Activated T-helper 2 cell treated with anti-CD3 and anti-CD28 coated beads, Interferon-gamma antibody, Interleukin-2, Interleukin-4, amounts not matched to agents 10 μg/mL and 5 μg/mL and 100 μg/mL, durations not matched to agents 14 hours and 24 hours and 36 hours (primary cell): ENCODE measurements at regions of chr3 and their contacts with region 1.

Region 1: GRCh38 chr3:48268381-48269183 is 27.7 kb downstream of the ZNF589 start:
- DNase-seq: peak; percentile 71
- H3K4me3 Mint-ChIP-seq: peak overlapping the region; percentile 58
- H3K27ac Mint-ChIP-seq: peak overlapping the region; percentile 94
- H3K4me1 Mint-ChIP-seq: peaks cover 41% of the 10 kb centered on the region
- H3K27me3 Mint-ChIP-seq: no peaks in the 10 kb centered on the region

Region 2: DNA sequence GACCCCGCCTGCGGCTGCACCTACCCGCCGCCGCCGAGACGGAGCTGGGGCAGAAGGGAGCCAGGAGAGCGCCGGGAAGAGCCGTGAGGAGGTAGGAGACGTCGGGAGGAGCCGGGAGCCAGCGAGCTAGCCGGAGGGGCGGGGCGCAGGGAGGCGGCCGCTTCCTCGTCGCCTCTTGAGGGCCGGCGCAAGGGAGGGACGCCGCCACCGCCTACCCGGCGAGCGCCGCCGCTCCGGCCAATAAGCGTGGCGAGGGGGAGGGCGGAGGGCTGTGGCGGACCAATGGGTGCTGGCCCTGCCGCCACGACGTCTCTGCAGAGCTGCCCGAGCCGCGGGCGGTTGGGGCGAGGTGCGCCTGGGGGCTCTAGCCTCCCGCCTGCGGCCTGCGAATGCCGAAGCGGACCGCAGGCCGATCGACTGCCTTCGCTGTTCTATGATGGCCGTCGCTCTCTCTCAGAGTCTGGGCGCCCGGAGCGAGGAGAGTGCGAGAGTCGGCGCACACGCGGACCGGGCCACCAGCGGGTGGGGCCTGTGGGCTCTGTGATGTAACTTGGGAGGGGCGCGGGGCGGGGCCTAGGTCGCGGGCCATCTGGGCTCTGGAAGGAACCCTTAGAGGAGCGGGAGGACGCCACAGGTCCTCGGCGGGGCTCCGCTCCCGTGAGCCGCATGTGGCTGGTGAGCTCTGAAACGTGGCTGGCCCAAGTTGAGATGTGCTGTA is 179.7 kb before region 1 on chr3:
- intact Hi-C with region 1: loop called (anchors 5 kb)
- DNase-seq: peak; percentile 94
- H3K4me3 Mint-ChIP-seq: peak overlapping the region; percentile 97
- H3K27ac Mint-ChIP-seq: peak overlapping the region; percentile 97
- H3K4me1 Mint-ChIP-seq: peaks cover 21% of the 10 kb centered on the region
- H3K27me3 Mint-ChIP-seq: peaks cover 2% of the 10 kb centered on the region

Region 3: DNA sequence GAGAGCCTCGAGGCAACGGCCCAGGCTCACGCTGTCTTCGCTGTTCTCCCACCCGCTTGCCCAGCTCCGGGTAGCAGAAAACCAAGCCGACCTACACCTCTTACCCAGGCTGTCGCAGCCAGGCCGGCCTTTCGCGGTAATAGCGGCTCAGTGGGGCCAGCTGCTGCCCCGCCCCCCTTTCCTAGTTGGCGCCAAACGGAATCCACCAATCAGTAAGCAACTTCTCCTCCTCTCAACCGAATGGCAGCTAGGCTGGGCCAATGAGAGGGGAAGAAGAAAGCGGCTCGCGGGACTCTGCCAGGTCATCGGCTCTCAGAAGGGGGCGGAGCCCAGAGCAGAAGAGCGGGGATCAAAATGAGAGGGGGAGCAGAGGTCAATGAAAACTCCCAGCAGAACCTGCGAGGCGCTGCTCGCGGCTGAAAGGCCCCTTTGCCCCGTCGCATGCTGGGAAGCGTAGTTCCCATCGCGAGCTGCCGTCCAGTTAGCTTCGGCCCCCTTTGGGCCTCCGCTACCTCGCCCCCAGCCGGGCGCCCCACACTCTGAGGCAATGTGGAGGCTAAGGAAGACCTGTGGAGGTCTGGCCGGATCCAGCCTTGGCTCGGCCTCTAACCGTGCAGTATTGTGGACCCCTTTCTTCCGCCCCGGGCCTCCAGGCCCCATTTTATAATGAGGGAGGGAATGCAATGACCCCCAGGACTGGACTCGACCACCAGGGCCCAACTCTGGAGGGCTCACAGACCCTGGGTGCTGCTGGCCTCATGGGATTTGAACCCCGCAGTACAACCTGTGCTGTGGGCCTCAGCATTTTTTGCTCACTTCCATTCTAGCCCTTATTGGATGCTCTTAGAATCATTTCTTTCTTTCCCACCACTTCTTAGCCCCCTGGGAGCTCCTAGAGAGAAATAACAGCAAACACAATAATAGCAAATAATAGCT is 80.0 kb before region 1 on chr3 and contains the start of gene CDC25A:
- intact Hi-C with region 1: loop called (anchors 1 kb)
- DNase-seq: peak; percentile 97
- H3K4me3 Mint-ChIP-seq: peak within 1 kb of the TSS; percentile 92
- H3K27ac Mint-ChIP-seq: peak within 1 kb of the TSS; percentile 86
- H3K4me1 Mint-ChIP-seq: peaks cover 23% of the 10 kb centered on the region
- H3K27me3 Mint-ChIP-seq: no peaks in the 10 kb centered on the region
- total RNA-seq, gene CDC25A: 39.1 and 40.5 TPM in 2 replicates

Region 4: DNA sequence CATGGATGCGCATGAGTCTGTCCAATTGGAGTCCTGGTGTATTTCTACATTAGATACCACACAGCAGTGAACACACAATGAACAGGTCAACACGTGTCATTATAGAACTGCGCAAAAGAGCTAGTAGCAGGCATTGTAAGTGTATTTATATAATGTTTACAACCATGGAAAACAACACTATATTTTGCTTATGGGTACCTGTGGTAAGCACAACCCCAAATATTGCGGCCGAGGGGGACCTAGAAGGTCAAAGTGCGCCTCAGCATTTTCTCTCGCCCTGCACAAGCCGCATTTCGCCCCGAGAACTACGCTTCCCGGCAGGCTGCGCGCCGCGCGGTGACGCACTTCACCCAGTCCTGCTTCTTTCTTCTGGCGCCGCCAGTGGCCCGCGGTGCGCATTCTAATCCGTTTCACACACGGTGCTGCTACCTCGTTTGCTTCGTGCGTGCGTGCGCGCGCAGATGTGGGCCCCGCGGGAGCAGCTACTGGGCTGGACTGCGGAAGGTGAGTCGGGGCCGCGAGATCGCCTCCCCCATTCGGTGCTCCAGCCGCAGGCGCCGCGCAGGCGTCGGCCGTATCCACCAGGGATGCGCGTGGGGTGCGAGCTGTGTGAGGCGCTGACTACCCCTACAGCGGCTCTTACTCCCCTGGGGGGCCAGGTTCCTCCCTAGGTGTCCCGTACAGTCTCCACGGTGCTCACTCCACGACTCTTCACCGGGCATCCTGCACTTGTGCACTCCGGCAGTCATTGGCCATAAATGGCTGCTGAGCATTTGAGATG is 27.7 kb before region 1 on chr3 and contains the start of gene ZNF589:
- intact Hi-C with region 1: loop called (anchors 1 kb)
- DNase-seq: peak; percentile 94
- H3K4me3 Mint-ChIP-seq: peak within 1 kb of the TSS; percentile 91
- H3K27ac Mint-ChIP-seq: peak within 1 kb of the TSS; percentile 96
- H3K4me1 Mint-ChIP-seq: peaks cover 20% of the 10 kb centered on the region
- H3K27me3 Mint-ChIP-seq: no peaks in the 10 kb centered on the region
- total RNA-seq, gene ZNF589: 40.2 and 42.8 TPM in 2 replicates

Region 5: GRCh38 chr3:48301020-48301796 is 32.6 kb after region 1 on chr3:
- intact Hi-C with region 1: loop called (anchors 1 kb)
- DNase-seq: peak; percentile 87
- H3K4me3 Mint-ChIP-seq: peak within 1 kb of the TSS; percentile 95
- H3K27ac Mint-ChIP-seq: peak within 1 kb of the TSS; percentile 98
- H3K4me1 Mint-ChIP-seq: peaks cover 26% of the 10 kb centered on the region
- H3K27me3 Mint-ChIP-seq: peaks cover 13% of the 10 kb centered on the region

Region 6: DNA sequence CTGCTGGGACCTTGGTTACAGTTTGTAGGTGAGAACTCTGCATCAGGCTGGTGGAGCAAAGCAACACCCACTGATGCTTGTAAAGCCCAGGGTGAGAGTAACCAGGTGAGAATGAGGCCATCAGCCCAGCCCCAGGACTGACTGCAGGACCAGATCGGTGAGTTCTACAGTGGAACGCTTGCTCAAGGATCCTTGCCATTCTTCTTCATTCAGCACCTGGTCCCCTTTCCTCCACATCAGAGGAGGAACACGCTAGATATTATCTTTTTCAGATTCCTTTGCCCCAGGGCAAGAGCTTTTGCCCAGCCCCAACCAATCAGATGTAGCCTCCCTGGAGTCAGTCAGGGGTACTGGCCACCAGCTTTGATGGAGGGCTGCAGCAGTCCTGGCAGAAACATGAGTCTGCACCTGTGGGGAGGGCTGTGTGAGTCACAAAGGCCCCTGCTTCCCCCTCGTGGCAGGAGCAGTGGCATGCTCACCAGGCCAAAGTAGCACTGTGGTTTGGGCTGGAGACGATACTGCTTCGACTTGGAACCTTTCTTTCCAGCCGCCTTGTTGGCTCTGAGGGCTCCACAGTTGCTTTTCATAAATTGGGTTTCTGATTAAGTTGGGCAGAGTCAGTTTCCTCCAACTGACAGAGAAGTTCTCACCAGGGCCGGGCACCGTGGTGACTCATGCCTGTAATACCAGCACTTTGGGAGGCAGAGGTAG is 238.9 kb after region 1 on chr3:
- intact Hi-C with region 1: loop called (anchors 1 kb)
- DNase-seq: peak; percentile 63
- H3K4me3 Mint-ChIP-seq: no peak overlapping the region
- H3K27ac Mint-ChIP-seq: peak overlapping the region; percentile 1
- H3K4me1 Mint-ChIP-seq: peaks cover 39% of the 10 kb centered on the region
- H3K27me3 Mint-ChIP-seq: no peaks in the 10 kb centered on the region